Activated CD8-positive, alpha-beta T cell treated with anti-CD3 and anti-CD28 coated beads for 36 hours (primary cell): ENCODE measurements at regions of chr11 and their contacts with region 1.

Region 1: GRCh38 chr11:46936138-46937110 is at the start of gene CSTPP1:
- DNase-seq: peak; percentile 96
- ATAC-seq: peak; percentile 99
- H3K4me3 Mint-ChIP-seq: peak within 1 kb of the TSS; percentile 83
- H3K27ac Mint-ChIP-seq: peak within 1 kb of the TSS; percentile 85
- H3K4me1 Mint-ChIP-seq: peaks cover 14% of the 10 kb centered on the region
- H3K27me3 Mint-ChIP-seq: peaks cover 3% of the 10 kb centered on the region
- CTCF ChIP-seq: no peak
- total RNA-seq, gene CSTPP1: 12.8 to 14.4 TPM

Region 2: GRCh38 chr11:46916286-46917108 is 19.9 kb before region 1 on chr11:
- CTCF ChIA-PET with region 1: interaction called, 10 read pairs
- POLR2A ChIA-PET with region 1: interaction called, 8 read pairs
- intact Hi-C with region 1: no loop called
- DNase-seq: peak; percentile 37
- ATAC-seq: peak; percentile 43
- H3K4me3 Mint-ChIP-seq: peak overlapping the region; percentile 69
- H3K27ac Mint-ChIP-seq: no peak overlapping the region
- H3K4me1 Mint-ChIP-seq: peaks cover 23% of the 10 kb centered on the region
- H3K27me3 Mint-ChIP-seq: peaks cover 50% of the 10 kb centered on the region
- CTCF ChIP-seq: no peak

Region 3: GRCh38 chr11:47020793-47021526 is 84.5 kb after region 1 on chr11:
- CTCF ChIA-PET with region 1: no interaction called
- POLR2A ChIA-PET with region 1: no interaction called
- intact Hi-C with region 1: no loop called
- DNase-seq: no peak
- ATAC-seq: no peak
- H3K4me3 Mint-ChIP-seq: no peak overlapping the region
- H3K27ac Mint-ChIP-seq: no peak overlapping the region
- H3K4me1 Mint-ChIP-seq: no peaks in the 10 kb centered on the region
- H3K27me3 Mint-ChIP-seq: no peaks in the 10 kb centered on the region
- CTCF ChIP-seq: no peak